WTC11 (cell line): ENCODE measurements at regions of chr2 and their contacts with region 1.

Region 1: GRCh38 chr2:81734981-81735380 is 1430.4 kb upstream of the LRRTM1 start:
- DNase-seq: no peak
- ATAC-seq: no peak
- H3K4me3 Mint-ChIP-seq: no peak overlapping the region
- H3K27ac Mint-ChIP-seq: no peak overlapping the region; the same call in 1 of the 2 replicates
- H3K4me1 Mint-ChIP-seq: peaks cover 10% of the 10 kb centered on the region
- H3K27me3 Mint-ChIP-seq: no peaks in the 10 kb centered on the region
- CTCF ChIP-seq: no peak

Region 2: DNA sequence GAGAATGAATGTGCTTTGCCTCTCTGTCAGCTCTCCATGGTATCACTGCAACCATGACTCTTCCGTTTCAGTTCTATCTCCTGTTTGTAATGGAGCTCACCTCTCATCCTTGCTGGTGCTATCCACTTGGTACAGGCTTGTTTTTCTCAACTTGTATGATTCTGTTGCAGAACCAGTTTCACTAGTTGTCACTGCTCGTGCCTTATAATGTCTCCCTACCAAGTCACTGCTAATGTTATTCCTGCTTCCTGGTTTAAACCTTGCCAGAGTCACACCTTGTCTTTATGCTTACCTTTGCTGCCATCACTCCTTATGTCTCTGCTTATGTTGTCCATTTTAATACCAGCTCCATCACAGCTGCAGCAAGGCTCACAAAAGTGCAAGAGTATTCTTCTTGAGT is 239.4 kb before region 1 on chr2:
- CTCF ChIA-PET with region 1: no interaction called
- POLR2A ChIA-PET with region 1: interaction called, 10 read pairs
- DNase-seq: no peak
- ATAC-seq: no peak
- H3K4me3 Mint-ChIP-seq: no peak overlapping the region
- H3K27ac Mint-ChIP-seq: no peak overlapping the region
- H3K4me1 Mint-ChIP-seq: no peaks in the 10 kb centered on the region
- H3K27me3 Mint-ChIP-seq: no peaks in the 10 kb centered on the region
- CTCF ChIP-seq: no peak